ENCODE measurements at regions of chrX and their contacts with region 1.

Region 1: GRCh38 chrX:48676106-48676892 is 7.3 kb upstream of the WAS start:
- DNase-seq: peak; percentile 84 to 85
- H3K4me3 ChIP-seq: peak overlapping the region; percentile 66 to 72 (median 67)
- H3K27ac ChIP-seq: peak overlapping the region; percentile 83 to 85
- H3K4me1 ChIP-seq: no peaks in the 10 kb centered on the region
- H3K27me3 ChIP-seq: peaks cover 0 to 24% of the 10 kb centered on the region in 2 donors
- CTCF ChIP-seq: no peak
- POLR2A ChIP-seq: peak; percentile 8

Region 2: DNA sequence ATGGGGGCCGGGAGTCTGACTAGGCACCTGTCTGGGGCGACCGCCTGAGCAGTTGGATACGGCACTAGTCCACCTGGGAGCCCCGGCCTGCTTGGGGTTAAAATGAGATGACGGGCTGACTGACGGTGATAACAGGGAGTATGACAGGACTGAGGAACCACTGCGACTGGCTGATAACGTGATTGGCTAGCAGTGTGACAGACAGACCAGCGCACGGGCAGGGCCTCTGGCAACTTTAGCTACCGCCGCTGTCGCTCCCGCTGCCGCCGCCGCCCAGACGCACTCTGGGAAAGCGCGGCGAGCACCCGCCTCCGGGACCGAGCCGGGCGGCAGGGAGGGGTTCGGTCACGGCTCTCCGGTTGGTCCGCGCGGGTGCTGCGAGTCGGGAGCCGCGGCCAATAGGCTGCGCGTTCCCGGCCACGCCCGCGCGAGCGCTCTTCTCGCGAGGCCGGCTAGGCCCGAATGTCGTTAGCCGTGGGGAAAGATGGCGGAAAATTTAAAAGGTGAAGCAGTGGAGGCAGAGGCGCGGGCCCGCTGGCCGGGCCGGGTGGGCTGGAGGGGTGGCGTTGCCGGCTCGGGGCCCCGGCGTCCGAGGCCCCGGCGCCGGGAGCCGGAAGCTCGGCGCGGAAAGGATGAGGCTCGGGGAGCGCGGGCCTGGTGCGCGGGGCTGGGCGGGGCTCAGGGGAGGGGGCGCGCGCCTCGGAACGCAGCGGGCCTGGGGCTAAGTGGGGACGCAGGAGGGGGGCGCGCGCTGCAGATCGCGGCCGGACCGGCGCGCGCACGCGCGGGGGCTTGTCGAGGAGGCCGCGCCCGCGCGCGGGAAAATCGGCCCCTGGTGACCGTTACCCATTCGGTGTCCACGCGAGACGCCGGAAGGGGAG is 20.2 kb after region 1 on chrX and contains the start of gene SUV39H1:
- intact Hi-C with region 1: loop called (anchors 1 kb)
- DNase-seq: peak; percentile 78 to 83
- H3K4me3 ChIP-seq: peak within 1 kb of the TSS; percentile 58 to 74 (median 70)
- H3K27ac ChIP-seq: peak within 1 kb of the TSS; percentile 88 to 90
- H3K4me1 ChIP-seq: no peaks in the 10 kb centered on the region
- H3K27me3 ChIP-seq: peaks cover 0 to 34% of the 10 kb centered on the region in 2 donors
- CTCF ChIP-seq: no peak
- POLR2A ChIP-seq: peak; percentile 50
- total RNA-seq, gene SUV39H1: 3.6 to 7.0 (median 5.3) TPM

Region 3: DNA sequence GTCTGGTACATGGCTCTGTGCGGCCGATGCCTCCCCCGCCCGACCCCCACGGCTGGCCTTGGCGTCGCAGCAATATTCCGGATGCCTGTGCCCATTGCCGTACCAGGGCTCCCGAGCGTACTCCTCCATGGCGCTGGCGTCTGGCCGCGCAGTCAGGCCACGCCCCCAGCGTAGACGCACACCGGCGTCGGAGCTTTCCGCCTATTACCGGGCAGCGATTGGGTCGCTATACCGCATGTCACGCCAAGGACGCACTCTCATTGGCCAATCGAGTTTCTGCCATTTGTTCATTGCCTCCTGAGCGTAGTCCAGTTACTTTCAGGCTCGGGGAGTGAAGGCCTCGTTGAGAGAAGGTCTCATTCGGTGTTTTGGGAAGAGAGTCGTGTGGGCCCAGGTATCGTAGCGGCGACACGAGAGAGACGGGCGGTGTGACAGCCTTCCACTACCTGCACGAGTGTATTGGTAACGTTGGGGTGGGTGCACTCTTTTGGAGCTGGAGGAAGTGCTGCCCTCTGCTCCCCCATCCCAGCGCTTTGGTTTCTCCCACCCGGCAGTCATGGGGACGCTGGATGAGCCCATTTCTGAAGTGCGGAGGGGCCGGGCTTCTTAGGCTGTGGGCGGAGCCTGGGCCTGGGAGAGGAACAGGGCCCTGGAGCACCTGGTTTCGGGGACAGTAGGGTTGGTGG is 221.5 kb after region 1 on chrX and contains the starts of genes PQBP1 and TIMM17B:
- intact Hi-C with region 1: loop called (anchors 10 kb)
- DNase-seq: peak; percentile 83 to 90
- H3K4me3 ChIP-seq: peak within 1 kb of the TSS; percentile 63 to 78 (median 72)
- H3K27ac ChIP-seq: peak within 1 kb of the TSS; percentile 96 to 97
- H3K4me1 ChIP-seq: no peaks in the 10 kb centered on the region
- H3K27me3 ChIP-seq: peaks cover 0 to 34% of the 10 kb centered on the region in 2 donors
- CTCF ChIP-seq: no peak
- POLR2A ChIP-seq: peak; percentile 62
- total RNA-seq, gene PQBP1: 56.0 to 71.4 (median 71.0) TPM
- total RNA-seq, gene TIMM17B: 32.3 to 40.8 (median 35.4) TPM

Measured in breast epithelium (tissue), 4 donors.